Testis (tissue), 5 donors: ENCODE measurements at regions of chr15 and their contacts with region 1.

Region 1: DNA sequence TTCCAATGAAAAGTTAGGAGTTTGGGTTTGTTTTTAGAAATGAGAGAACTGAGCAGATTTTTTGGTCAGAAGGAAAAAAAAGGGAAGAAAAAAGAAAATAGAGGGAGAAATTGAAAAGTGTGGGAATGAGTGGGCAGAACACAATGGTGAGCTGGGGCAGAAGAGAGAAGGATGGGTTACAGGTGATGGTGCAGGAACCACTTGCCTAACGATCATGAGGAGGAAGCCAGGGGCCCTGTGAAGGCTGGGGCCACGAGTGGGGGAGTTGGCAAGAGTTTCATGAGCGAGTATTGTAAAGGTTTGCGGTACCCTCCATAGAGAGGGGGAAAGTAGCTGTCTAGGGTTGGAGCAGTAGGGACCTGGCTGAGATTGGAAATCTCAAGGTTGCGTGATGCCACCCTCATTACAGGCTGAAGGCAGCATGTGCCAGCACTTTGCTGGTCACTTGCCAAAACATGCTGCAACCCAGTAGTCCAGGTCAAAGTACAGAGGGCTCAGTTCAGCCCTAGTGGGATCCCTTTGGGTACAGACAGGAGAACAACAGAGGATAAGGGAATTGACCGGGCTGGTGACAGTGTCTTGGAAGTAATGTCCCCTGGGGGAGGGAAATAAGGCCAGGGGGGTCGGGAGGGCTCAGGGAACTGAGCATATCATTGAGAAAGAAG is 6.6 kb downstream of the IVD start:
- DNase-seq: no peak
- H3K4me3 ChIP-seq: no peak overlapping the region
- H3K27ac ChIP-seq: no peak overlapping the region
- H3K4me1 ChIP-seq: no peaks in the 10 kb centered on the region
- H3K27me3 ChIP-seq: no peaks in the 10 kb centered on the region
- CTCF ChIP-seq: no peak
- POLR2A ChIP-seq: no peak

Region 2: GRCh38 chr15:40367686-40368611 is 44.3 kb before region 1 on chr15:
- intact Hi-C with region 1: loop called (anchors 10 kb)
- DNase-seq: peak; percentile 89
- H3K4me3 ChIP-seq: peak overlapping the region; percentile 37 to 45
- H3K27ac ChIP-seq: no peak overlapping the region
- H3K4me1 ChIP-seq: no peaks in the 10 kb centered on the region
- H3K27me3 ChIP-seq: no peaks in the 10 kb centered on the region
- CTCF ChIP-seq: peak; percentile 77 to 83 (median 80)
- POLR2A ChIP-seq: no peak

Region 3: GRCh38 chr15:40398413-40398873 is 13.8 kb before region 1 on chr15:
- intact Hi-C with region 1: no loop called
- DNase-seq: no peak
- H3K4me3 ChIP-seq: no peak overlapping the region
- H3K27ac ChIP-seq: no peak overlapping the region
- H3K4me1 ChIP-seq: no peaks in the 10 kb centered on the region
- H3K27me3 ChIP-seq: no peaks in the 10 kb centered on the region
- CTCF ChIP-seq: no peak
- POLR2A ChIP-seq: no peak